Left cardiac atrium (tissue), 4 donors: ENCODE measurements at regions of chr1 and their contacts with region 1.

Region 1: GRCh38 chr1:241834733-241835377 is 13.1 kb upstream of the EXO1 start:
- DNase-seq: no peak
- ATAC-seq: no peak

Region 2: GRCh38 chr1:241611063-241611462 is 223.8 kb before region 1 on chr1:
- intact Hi-C with region 1: loop called in 1 of 2 experiments (anchors 10 kb)
- DNase-seq: no peak
- ATAC-seq: peak; percentile 83

Region 3: GRCh38 chr1:242033447-242033846 is 198.6 kb after region 1 on chr1:
- intact Hi-C with region 1: no loop called
- DNase-seq: no peak
- ATAC-seq: no peak